H1 (cell line): ENCODE measurements at regions of chr6 and their contacts with region 1.

Region 1: DNA sequence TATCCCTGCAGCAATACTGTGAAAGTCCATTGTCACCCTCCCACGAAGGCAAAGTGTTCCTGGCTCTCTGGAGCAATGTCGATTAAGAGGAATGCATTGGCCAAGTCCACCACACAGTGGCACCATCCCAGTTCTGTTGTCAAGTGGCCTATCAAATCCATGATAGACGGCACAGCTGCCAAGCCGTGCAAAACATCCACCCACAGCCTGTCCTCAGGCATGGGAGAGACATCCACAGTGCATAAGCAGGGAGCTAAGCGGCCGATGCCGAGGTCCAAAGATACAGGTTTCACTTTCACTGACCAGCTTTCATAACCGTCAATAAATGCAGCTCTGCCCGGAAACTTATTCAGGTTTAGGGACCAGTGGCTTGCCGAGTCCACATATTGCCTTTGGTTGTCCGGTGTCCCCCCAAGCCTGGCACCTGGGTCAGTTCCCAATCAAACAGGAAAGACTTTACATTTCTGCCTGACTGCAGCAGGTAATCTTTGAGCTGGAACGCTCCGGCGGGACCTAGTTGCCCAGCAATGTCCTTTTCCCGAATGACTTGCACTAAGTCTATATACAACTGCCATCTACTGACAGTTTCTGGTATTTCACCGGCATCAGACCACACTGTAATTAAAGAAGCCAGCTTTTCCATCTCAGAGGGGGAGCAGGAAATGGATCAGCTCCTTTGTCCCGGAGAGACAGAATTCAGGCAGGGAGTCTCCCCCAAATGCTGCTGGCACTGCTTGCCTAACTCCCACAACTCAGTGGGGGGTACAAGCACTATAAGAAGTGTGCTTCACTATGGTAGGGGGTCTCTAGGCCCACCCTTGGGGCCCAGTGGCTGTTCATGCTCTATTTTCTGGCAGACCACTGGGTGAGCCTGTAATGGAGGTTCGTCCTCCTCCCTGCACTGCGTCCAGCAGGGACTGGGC is 6.3 kb downstream of the ZKSCAN3 start:
- DNase-seq: peak; percentile 62 to 76
- H3K4me3 ChIP-seq: peak overlapping the region; percentile 18 to 49 (median 28); a peak in 6 of 8 replicates
- H3K27ac ChIP-seq: peak overlapping the region; percentile 53; the same call in 1 of the 2 replicates
- H3K4me1 ChIP-seq: peaks cover 4 to 6% (median 5%) of the 10 kb centered on the region in 4 experiments; a peak in 5 of 7 replicates
- H3K27me3 ChIP-seq: no peaks in the 10 kb centered on the region
- CTCF ChIP-seq: peak; percentile 18 to 72 (median 66)
- EP300 ChIP-seq: 0 out of 3 replicates have a peak, but pooled peaks of 1 of the 2 experiments have one; percentile 17
- POLR2A ChIP-seq: no peak
- RAD21 ChIP-seq: peak; percentile 81 to 86

Region 2: GRCh38 chr6:28104392-28105244 is 251.4 kb before region 1 on chr6:
- CTCF ChIA-PET with region 1: interaction called, 10 read pairs
- POLR2A ChIA-PET with region 1: no interaction called
- DNase-seq: peak; percentile 72 to 88
- H3K4me3 ChIP-seq: peak overlapping the region; percentile 62 to 79 (median 76)
- H3K27ac ChIP-seq: no peak overlapping the region; the same call in 1 of the 2 replicates
- H3K4me1 ChIP-seq: peaks cover 0 to 6% (median 2%) of the 10 kb centered on the region in 4 experiments; a peak in 3 of 7 replicates
- H3K27me3 ChIP-seq: no peaks in the 10 kb centered on the region; a peak in 4 of 7 replicates
- CTCF ChIP-seq: peak; percentile 58 to 72 (median 62)
- EP300 ChIP-seq: no peak
- POLR2A ChIP-seq: peak in 1 of 2 experiments; percentile 80; a peak in 2 of 3 replicates
- RAD21 ChIP-seq: peak; percentile 35 to 61

Region 3: GRCh38 chr6:28281288-28282064 is 74.5 kb before region 1 on chr6 and contains the start of gene PGBD1:
- CTCF ChIA-PET with region 1: interaction called, 17 read pairs
- POLR2A ChIA-PET with region 1: interaction called, 12 read pairs
- DNase-seq: peak; percentile 50 to 92
- H3K4me3 ChIP-seq: peak within 1 kb of the TSS; percentile 61 to 95 (median 82)
- H3K27ac ChIP-seq: no peak within 1 kb of the TSS
- H3K4me1 ChIP-seq: peaks cover 0 to 2% (median 0%) of the 10 kb centered on the region in 4 experiments; a peak in 2 of 7 replicates
- H3K27me3 ChIP-seq: no peaks in the 10 kb centered on the region
- CTCF ChIP-seq: no peak
- EP300 ChIP-seq: no peak
- POLR2A ChIP-seq: peak; percentile 60 to 83
- RAD21 ChIP-seq: peak; percentile 9 to 18; a peak in 1 of 4 replicates
- total RNA-seq, gene PGBD1: 7.6 and 9.2 TPM in 2 replicates

Region 4: GRCh38 chr6:28311139-28311823 is 44.7 kb before region 1 on chr6:
- CTCF ChIA-PET with region 1: interaction called, 13 read pairs
- POLR2A ChIA-PET with region 1: no interaction called
- DNase-seq: no peak
- H3K4me3 ChIP-seq: no peak overlapping the region
- H3K27ac ChIP-seq: no peak overlapping the region
- H3K4me1 ChIP-seq: peaks cover 0 to 1% (median 0%) of the 10 kb centered on the region in 4 experiments; a peak in 4 of 7 replicates
- H3K27me3 ChIP-seq: no peaks in the 10 kb centered on the region
- CTCF ChIP-seq: no peak
- EP300 ChIP-seq: no peak
- POLR2A ChIP-seq: no peak
- RAD21 ChIP-seq: no peak

Region 5: DNA sequence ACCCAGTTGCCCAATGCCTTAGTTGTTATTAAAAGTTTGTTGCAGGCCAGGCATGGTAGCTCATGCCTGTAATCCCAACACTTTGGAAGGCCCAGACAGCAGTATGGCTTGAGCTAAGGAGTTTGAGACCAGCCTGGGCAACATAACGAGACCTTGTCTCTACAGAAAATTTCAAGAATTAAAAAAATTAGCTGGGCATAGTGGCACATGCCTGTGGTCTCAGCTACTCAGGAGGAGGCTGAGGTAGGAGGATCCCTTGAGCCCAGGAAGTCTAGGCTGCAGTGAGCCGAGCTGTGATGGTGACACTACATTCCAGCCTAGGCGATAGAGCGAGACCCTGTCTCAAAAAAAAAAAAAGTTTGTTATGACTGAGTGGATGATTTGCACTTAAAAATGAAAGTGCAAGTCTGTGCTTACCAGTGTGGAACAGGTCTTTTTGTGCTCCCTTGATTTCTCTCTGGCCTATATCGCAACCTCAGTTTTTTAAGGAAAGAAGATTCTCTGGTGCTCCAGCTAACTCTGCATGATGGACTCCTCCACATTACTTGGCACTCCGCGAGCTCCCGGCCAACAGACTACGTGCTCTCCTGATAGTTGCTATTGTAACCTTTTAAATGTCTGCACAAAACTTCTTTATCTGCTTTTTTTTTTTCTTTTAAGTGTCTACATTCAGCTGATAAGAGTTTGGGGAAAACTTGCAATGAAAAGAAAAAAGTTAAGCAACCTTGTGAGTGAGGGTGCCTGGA is 15.9 kb after region 1 on chr6:
- CTCF ChIA-PET with region 1: interaction called, 14 read pairs
- POLR2A ChIA-PET with region 1: no interaction called
- DNase-seq: no peak
- H3K4me3 ChIP-seq: no peak overlapping the region
- H3K27ac ChIP-seq: no peak overlapping the region
- H3K4me1 ChIP-seq: no peaks in the 10 kb centered on the region
- H3K27me3 ChIP-seq: no peaks in the 10 kb centered on the region
- CTCF ChIP-seq: no peak
- EP300 ChIP-seq: no peak
- POLR2A ChIP-seq: no peak
- RAD21 ChIP-seq: no peak

Region 6: GRCh38 chr6:28383235-28384142 is 27.5 kb after region 1 on chr6:
- CTCF ChIA-PET with region 1: interaction called, 34 read pairs
- POLR2A ChIA-PET with region 1: interaction called, 8 read pairs
- DNase-seq: peak; percentile 87 to 94
- H3K4me3 ChIP-seq: peak overlapping the region; percentile 52 to 68 (median 61)
- H3K27ac ChIP-seq: peak overlapping the region; percentile 41; the same call in 1 of the 2 replicates
- H3K4me1 ChIP-seq: peaks cover 0 to 3% (median 1%) of the 10 kb centered on the region in 4 experiments; a peak in 3 of 7 replicates
- H3K27me3 ChIP-seq: no peaks in the 10 kb centered on the region
- CTCF ChIP-seq: peak; percentile 33 to 61 (median 46)
- EP300 ChIP-seq: no peak; a peak in 1 of 3 replicates
- POLR2A ChIP-seq: peak; percentile 76 to 83
- RAD21 ChIP-seq: peak; percentile 53; a peak in 3 of 4 replicates

Region 7: DNA sequence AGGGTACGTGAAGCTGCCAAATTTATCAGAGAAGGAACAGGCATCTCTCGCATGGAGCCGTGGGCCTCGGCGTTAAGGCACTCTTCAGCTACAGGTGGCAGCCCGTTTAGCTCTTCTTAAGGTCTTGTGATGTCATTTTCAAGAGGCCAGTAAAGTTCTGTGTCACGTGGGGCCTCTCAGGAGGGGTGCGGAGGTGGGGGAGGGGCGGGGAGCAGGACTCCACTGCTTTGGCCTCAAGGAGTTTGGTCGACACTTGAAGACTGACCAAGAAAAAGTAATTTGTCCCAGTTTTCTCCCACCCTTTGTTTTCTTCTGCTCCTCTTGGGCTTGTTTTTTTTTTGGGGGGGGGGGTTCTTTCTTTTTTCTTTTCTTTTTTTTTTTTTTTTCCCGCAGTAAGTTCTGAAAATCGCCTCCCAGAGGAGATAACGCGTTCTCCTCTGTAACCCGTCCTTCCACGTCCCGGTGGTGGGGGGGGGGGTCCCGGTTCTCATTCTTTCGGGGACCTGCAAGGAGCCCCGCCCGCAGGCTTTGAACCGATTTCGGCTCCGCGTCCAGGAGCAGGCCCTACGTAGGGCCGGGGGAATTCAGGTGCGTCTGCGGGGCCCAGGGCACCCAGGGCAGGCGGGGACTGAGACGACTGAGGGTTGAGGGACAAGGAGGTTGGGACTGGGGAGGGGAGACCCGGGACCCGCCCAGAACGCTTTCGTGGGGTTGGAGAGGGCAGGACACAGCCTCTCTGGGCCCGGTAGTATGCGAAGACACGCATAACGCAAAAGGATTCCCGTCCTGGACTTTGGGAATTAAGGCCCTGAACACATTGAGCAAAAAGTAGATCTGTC is 133.6 kb after region 1 on chr6:
- CTCF ChIA-PET with region 1: no interaction called
- POLR2A ChIA-PET with region 1: no interaction called
- DNase-seq: peak; percentile 77 to 82
- H3K4me3 ChIP-seq: peak overlapping the region; percentile 69 to 80 (median 76)
- H3K27ac ChIP-seq: peak overlapping the region; percentile 34; the same call in 1 of the 2 replicates
- H3K4me1 ChIP-seq: peaks cover 0 to 6% (median 2%) of the 10 kb centered on the region in 4 experiments; a peak in 2 of 7 replicates
- H3K27me3 ChIP-seq: peaks cover 0 to 2% (median 0%) of the 10 kb centered on the region in 4 experiments; a peak in 2 of 7 replicates
- CTCF ChIP-seq: no peak
- EP300 ChIP-seq: 0 out of 3 replicates have a peak, but pooled peaks of 1 of the 2 experiments have one; percentile 5
- POLR2A ChIP-seq: peak; percentile 52 to 75
- RAD21 ChIP-seq: no peak